Heart right ventricle (tissue), 16 donors: ENCODE measurements at regions of chr9 and their contacts with region 1.

Region 1: GRCh38 chr9:8660383-8660782 is 860.8 kb upstream of the DMAC1 start:
- DNase-seq: peak; percentile 38 to 57
- ATAC-seq: peak; percentile 59 to 73 (median 72)
- H3K4me3 ChIP-seq: no peak overlapping the region
- H3K27ac ChIP-seq: no peak overlapping the region
- H3K4me1 ChIP-seq: peaks cover 0 to 17% (median 11%) of the 10 kb centered on the region in 9 donors
- H3K27me3 ChIP-seq: no peaks in the 10 kb centered on the region
- CTCF ChIP-seq: no peak

Region 2: GRCh38 chr9:8627976-8628679 is 32.3 kb before region 1 on chr9:
- intact Hi-C with region 1: loop called in 1 of 10 experiments (anchors 2 kb)
- DNase-seq: no peak
- ATAC-seq: no peak
- H3K4me3 ChIP-seq: no peak overlapping the region
- H3K27ac ChIP-seq: no peak overlapping the region
- H3K4me1 ChIP-seq: peaks cover 0 to 10% (median 0%) of the 10 kb centered on the region in 9 donors
- H3K27me3 ChIP-seq: no peaks in the 10 kb centered on the region
- CTCF ChIP-seq: no peak

Region 3: DNA sequence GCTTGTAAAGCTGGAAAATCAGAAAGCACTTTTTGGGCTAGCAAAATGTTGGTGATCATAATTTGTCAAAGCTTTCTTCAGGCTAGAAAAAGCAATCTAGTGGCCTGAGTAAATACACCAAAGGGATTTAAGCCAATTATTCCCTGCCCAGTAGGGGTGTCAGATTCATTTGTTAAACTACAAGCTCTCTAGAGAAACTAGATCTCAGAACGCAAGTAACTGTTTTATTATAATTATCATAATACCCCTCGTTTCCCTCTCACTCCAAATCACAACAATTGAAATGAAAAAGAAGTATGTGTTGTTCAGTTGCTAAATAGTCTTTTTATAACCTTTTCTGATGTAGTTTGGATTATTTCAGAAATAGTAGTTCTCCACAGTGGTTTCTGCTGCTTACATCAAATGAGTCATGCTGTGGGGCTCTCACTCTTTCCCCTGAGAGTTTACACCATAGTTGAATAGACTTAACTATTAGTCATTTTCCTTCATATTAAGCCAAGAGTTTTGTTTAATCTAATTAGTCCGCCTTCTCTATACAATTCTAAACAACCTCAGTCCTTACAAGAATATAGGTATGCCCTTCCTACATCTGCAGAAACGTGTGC is 57.8 kb after region 1 on chr9:
- intact Hi-C with region 1: no loop called
- DNase-seq: no peak
- ATAC-seq: peak in 4 of 8 donors; percentile 65 to 81 (median 69)
- H3K4me3 ChIP-seq: peak overlapping the region in 1 of 10 donors; percentile 31
- H3K27ac ChIP-seq: peak overlapping the region in 2 of 10 donors; percentile 8 to 32
- H3K4me1 ChIP-seq: no peaks in the 10 kb centered on the region
- H3K27me3 ChIP-seq: no peaks in the 10 kb centered on the region
- CTCF ChIP-seq: no peak

Region 4: DNA sequence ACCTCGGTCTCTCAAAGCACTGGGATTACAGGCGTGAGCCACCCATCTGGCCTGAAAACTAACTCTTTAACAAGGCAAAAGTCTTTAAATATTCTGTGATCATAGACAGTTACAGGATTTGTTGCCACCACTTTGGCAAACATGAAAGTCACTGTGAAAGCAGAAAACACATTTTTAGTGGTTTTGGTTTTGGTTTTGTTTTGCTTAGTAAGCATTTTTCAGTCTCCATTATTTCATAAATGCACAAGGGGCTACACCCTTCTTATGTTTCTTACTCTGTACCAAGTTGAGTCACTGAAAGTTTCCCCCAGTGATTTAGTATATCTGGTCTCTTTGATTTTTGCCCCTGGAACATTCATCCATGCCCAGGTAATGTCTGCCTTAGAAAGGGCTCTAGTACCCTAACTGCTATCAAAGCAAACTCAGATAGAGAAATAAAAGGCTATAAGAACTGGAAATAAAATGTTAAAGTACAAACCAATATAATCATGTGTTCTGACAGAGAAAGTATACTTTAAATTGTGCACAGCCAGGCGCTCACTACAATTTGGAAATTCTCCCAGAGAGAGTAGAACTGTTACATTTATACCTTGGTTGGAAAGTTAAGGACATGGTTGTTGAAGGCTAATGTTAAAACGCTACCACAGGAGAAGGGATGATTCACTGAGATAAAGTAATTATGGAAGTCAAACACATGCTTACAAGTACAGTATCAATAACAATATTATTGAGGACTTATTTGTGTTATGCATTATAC is 161.7 kb after region 1 on chr9:
- intact Hi-C with region 1: loop called in 1 of 10 experiments (anchors 10 kb)
- DNase-seq: no peak
- ATAC-seq: no peak
- H3K4me3 ChIP-seq: no peak overlapping the region
- H3K27ac ChIP-seq: no peak overlapping the region
- H3K4me1 ChIP-seq: peaks cover 0 to 16% (median 0%) of the 10 kb centered on the region in 9 donors
- H3K27me3 ChIP-seq: no peaks in the 10 kb centered on the region
- CTCF ChIP-seq: no peak